ENCODE measurements at regions of chr3 and their contacts with region 1.

Region 1: DNA sequence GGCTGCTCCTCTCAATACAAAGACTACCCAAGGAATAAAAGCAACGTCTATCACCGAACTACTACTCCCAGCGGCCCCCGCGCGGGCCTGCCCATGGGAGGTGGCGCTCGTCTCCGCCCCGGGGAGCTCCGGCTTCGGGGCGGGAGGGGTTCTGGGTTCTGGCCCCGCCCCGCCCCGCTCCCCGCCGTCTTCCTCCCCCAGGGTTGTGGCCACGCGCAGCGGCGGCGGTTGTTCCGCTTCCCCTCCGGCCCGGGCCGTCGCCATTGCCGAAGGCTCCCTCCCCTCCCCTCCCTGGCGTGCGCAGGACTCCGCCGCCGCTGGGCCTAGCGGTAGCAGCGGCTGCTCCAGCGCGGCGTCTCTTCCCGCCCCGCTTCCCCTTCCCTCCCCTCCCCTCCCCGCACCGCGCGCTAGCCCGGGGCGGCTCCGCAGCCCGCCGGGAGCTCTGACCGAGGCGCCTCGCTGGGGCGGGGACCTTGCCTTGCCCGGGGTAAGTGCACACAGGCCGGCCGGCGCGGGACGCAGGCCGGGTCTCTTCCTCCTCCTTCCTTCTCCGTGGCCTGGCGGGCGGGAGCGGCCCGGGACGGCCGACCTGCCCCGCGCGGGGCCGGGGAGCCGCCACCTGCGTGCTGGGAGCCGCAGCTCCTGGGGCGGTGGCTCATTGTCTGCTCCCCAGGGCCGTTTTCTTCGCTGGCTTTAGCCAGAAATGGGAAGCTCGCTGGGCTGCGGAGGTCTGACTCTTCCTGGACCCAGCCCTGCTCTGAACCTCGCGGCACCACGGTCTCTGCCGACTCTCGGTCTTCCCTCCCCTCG is at the start of gene PAK2:
- DNase-seq: peak; percentile 90
- ATAC-seq: peak; percentile 93
- H3K4me3 Mint-ChIP-seq: peak within 1 kb of the TSS; percentile 100
- H3K27ac Mint-ChIP-seq: peak within 1 kb of the TSS; percentile 100
- H3K4me1 Mint-ChIP-seq: peaks cover 28% of the 10 kb centered on the region
- H3K27me3 Mint-ChIP-seq: no peaks in the 10 kb centered on the region
- CTCF ChIP-seq: no peak
- total RNA-seq, gene PAK2: 47.3 to 50.7 TPM (median 50.0 TPM) in 3 replicates

Region 2: GRCh38 chr3:196813903-196814302 is 74.0 kb after region 1 on chr3:
- CTCF ChIA-PET with region 1: no interaction called
- POLR2A ChIA-PET with region 1: interaction called, 13 read pairs
- DNase-seq: no peak
- ATAC-seq: no peak
- H3K4me3 Mint-ChIP-seq: no peak overlapping the region
- H3K27ac Mint-ChIP-seq: no peak overlapping the region
- H3K4me1 Mint-ChIP-seq: no peaks in the 10 kb centered on the region
- H3K27me3 Mint-ChIP-seq: no peaks in the 10 kb centered on the region
- CTCF ChIP-seq: no peak

Region 3: DNA sequence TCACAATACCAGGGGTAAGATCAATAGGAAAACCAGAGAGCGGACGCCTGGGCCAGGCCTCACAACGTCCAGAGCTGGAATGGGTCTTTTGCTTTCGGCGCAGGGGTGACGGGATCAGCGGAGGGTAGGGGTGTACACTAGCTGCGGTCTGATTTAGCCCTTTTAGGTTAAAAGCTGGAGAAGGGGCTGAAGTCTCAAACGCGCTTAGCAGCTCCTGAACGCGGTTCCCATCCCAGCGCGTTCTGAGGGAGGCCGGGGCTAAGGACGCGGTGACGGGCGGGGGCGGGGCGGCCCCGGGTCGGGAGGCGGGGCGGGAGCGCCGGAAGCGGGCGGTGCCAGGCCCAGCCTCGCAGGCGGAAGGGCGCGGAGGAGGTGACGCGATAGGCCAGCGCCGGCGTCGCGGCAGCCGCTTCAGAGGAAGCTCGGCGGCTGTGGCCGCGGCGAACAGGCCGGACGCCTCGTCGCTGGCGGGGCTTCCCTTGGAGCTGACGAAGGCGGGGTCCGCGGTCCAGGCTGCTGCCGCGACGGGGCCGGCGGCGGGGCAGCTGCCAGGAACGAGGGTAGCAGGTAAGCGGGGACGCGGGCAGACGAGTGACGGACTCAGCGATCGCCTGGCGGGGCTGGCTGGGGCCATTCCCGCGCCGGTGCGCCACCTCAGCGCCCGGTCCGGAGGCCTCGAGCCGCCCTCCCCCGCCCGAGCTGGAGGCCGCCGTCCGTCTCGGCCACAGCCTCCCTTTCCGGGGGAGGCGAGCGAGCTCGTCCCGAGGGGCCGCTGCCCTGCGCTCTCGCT is 127.8 kb after region 1 on chr3 and contains the start of gene SENP5:
- CTCF ChIA-PET with region 1: interaction called, 5 read pairs
- POLR2A ChIA-PET with region 1: interaction called, 10 read pairs
- DNase-seq: peak; percentile 87
- ATAC-seq: peak; percentile 96
- H3K4me3 Mint-ChIP-seq: peak within 1 kb of the TSS; percentile 97
- H3K27ac Mint-ChIP-seq: peak within 1 kb of the TSS; percentile 97
- H3K4me1 Mint-ChIP-seq: peaks cover 11% of the 10 kb centered on the region; the same call in 1 of the 2 replicates
- H3K27me3 Mint-ChIP-seq: no peaks in the 10 kb centered on the region
- CTCF ChIP-seq: no peak
- total RNA-seq, gene SENP5: 25.0 to 30.8 TPM (median 26.2 TPM) in 3 replicates

Region 4: DNA sequence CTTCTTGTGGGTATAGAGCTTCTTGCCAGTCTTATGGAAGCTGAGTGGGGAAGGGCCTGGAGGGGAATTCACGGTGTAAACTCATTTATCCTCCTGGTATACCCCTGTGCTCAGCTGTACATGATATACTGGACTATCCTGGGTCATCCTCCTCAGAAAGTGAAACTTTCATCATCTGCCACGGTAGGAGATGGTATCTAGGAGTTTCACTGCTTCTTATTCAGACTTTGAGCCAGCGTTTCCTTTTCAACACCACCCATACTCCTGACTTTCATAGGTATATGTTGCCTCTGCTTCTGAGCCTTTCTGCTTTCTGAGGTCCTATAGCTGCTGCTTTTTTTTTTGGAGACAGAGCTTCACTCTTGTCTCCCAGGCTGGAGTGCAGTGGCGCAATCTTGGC is 143.5 kb after region 1 on chr3:
- CTCF ChIA-PET with region 1: no interaction called
- POLR2A ChIA-PET with region 1: no interaction called
- DNase-seq: no peak
- ATAC-seq: no peak
- H3K4me3 Mint-ChIP-seq: no peak overlapping the region
- H3K27ac Mint-ChIP-seq: no peak overlapping the region
- H3K4me1 Mint-ChIP-seq: no peaks in the 10 kb centered on the region
- H3K27me3 Mint-ChIP-seq: no peaks in the 10 kb centered on the region
- CTCF ChIP-seq: no peak